Endothelial cell of umbilical vein (primary cell): ENCODE measurements at regions of chr17 and their contacts with region 1.

Region 1: GRCh38 chr17:64129764-64130558 is at the start of gene ERN1:
- DNase-seq: peak; percentile 92
- H3K4me3 ChIP-seq: peak within 1 kb of the TSS; percentile 68 to 92 (median 73)
- H3K27ac ChIP-seq: peak within 1 kb of the TSS; percentile 91
- H3K4me1 ChIP-seq: peaks cover 23% of the 10 kb centered on the region
- H3K27me3 ChIP-seq: no peaks in the 10 kb centered on the region
- CTCF ChIP-seq: no peak
- POLR2A ChIP-seq: peak; percentile 97
- total RNA-seq, gene ERN1: 14.7 and 21.5 TPM in 2 replicates

Region 2: DNA sequence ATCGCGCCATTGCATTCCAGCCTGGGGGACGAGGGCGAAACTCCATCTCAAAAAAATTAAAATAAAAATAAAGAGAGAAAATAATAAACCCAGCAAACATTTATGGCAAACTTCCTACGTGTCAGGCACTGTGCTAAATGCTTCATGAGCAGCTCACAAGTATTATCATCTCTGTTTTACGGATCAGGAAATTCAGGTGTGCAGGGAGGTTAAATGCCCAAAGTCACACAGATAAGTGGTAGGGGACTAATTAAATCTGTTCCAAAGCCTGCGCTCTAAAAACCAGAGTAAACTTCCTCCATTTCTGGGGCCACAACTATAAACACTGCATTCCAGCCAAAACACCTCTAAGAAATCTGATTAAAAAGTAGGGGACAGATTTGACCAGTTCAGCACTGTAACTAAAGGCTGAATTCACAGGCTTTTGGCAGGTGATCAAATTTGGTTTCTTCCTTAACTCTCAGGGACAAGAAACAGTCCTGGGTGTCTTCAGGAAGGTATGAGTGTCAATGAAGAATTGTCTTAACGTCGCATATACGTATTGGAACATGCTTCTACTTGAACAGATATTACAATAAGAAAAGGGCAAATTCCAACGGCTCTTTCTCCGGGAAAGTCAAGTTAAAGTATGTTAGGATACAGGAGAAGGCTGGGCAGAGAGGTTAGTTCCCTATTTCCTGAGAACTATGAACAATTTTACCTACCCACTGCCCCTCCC is 389.3 kb before region 1 on chr17:
- CTCF ChIA-PET with region 1: no interaction called
- POLR2A ChIA-PET with region 1: no interaction called
- dilution Hi-C with region 1: no loop called
- intact Hi-C with region 1: no loop called
- DNase-seq: peak; percentile 40
- H3K4me3 ChIP-seq: peak overlapping the region; percentile 72 to 98 (median 89)
- H3K27ac ChIP-seq: peak overlapping the region; percentile 77
- H3K4me1 ChIP-seq: peaks cover 12% of the 10 kb centered on the region
- H3K27me3 ChIP-seq: no peaks in the 10 kb centered on the region
- CTCF ChIP-seq: no peak
- POLR2A ChIP-seq: no peak

Region 3: GRCh38 chr17:63911657-63912426 is 218.1 kb before region 1 on chr17:
- CTCF ChIA-PET with region 1: interaction called, 33 read pairs
- POLR2A ChIA-PET with region 1: no interaction called
- dilution Hi-C with region 1: no loop called
- intact Hi-C with region 1: loop called (anchors 2 kb)
- DNase-seq: peak; percentile 26
- H3K4me3 ChIP-seq: no peak overlapping the region
- H3K27ac ChIP-seq: no peak overlapping the region
- H3K4me1 ChIP-seq: no peaks in the 10 kb centered on the region
- H3K27me3 ChIP-seq: peaks cover 6 to 8% of the 10 kb centered on the region in 2 experiments
- CTCF ChIP-seq: peak; percentile 34 to 70
- POLR2A ChIP-seq: no peak

Region 4: GRCh38 chr17:64005734-64006167 is 124.2 kb before region 1 on chr17:
- CTCF ChIA-PET with region 1: interaction called, 39 read pairs
- POLR2A ChIA-PET with region 1: interaction called, 12 read pairs
- dilution Hi-C with region 1: no loop called
- intact Hi-C with region 1: no loop called
- DNase-seq: peak; percentile 64
- H3K4me3 ChIP-seq: peak overlapping the region; percentile 66 to 87 (median 73)
- H3K27ac ChIP-seq: peak overlapping the region; percentile 91
- H3K4me1 ChIP-seq: peaks cover 85% of the 10 kb centered on the region
- H3K27me3 ChIP-seq: no peaks in the 10 kb centered on the region
- CTCF ChIP-seq: no peak
- POLR2A ChIP-seq: no peak

Region 5: GRCh38 chr17:64051153-64051552 is 78.8 kb before region 1 on chr17:
- CTCF ChIA-PET with region 1: interaction called, 21 read pairs
- POLR2A ChIA-PET with region 1: no interaction called
- dilution Hi-C with region 1: loop called (anchors 25 kb)
- intact Hi-C with region 1: no loop called
- DNase-seq: no peak
- H3K4me3 ChIP-seq: no peak overlapping the region
- H3K27ac ChIP-seq: no peak overlapping the region
- H3K4me1 ChIP-seq: no peaks in the 10 kb centered on the region
- H3K27me3 ChIP-seq: no peaks in the 10 kb centered on the region
- CTCF ChIP-seq: no peak
- POLR2A ChIP-seq: no peak

Region 6: GRCh38 chr17:64097196-64097936 is 32.6 kb before region 1 on chr17:
- CTCF ChIA-PET with region 1: interaction called, 10 read pairs
- POLR2A ChIA-PET with region 1: no interaction called
- dilution Hi-C with region 1: no loop called
- intact Hi-C with region 1: loop called (anchors 1 kb)
- DNase-seq: peak; percentile 97
- H3K4me3 ChIP-seq: no peak overlapping the region
- H3K27ac ChIP-seq: peak overlapping the region; percentile 83
- H3K4me1 ChIP-seq: peaks cover 26% of the 10 kb centered on the region
- H3K27me3 ChIP-seq: no peaks in the 10 kb centered on the region
- CTCF ChIP-seq: no peak
- POLR2A ChIP-seq: no peak

Region 7: DNA sequence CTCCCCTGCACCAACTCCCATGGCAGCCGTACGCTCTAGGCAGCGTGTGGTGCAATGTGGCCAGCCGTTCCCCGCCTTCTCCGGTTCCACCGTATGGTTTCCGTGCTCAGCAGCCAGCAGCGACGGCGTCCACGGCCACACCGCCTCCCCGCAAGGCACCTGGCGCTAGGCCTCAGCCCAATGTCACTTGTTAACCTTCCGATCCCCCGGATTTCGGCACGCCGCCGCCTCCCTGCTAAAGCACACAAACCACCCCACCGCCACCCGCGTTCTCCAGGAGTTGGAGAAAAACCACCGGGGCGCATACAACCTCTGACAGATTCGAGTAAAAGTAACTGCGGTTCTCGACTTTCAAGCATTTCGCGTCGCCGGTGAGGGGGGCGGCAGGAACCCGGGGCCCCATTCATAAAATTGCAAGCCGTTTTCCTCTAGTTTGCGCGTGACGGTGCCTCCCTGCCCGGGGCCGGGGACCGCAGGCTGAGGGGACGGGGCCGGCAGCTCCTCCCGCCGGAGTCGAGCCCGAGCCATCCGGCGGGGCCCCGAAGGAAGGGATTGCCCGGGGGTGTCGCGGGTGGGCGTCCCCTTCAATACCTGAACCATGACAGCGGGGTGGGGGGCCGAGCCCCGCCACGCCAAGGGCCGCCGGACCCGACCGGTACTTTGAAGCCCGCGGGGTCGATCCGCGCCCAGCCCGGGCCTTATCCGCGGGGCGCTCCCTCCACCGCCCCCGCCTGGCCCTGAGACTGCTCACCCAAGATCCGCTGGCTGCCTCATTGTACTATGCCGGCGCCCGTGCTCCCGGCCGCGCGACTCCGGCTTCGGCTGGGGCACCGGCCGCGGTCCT is 132.7 kb after region 1 on chr17 and contains the start of gene TEX2:
- CTCF ChIA-PET with region 1: interaction called, 11 read pairs
- POLR2A ChIA-PET with region 1: no interaction called
- dilution Hi-C with region 1: no loop called
- intact Hi-C with region 1: no loop called
- DNase-seq: peak; percentile 42
- H3K4me3 ChIP-seq: peak within 1 kb of the TSS; percentile 52 to 68 (median 59)
- H3K27ac ChIP-seq: peak within 1 kb of the TSS; percentile 40
- H3K4me1 ChIP-seq: peaks cover 14% of the 10 kb centered on the region
- H3K27me3 ChIP-seq: peaks cover 5 to 7% of the 10 kb centered on the region in 2 experiments
- CTCF ChIP-seq: no peak
- POLR2A ChIP-seq: peak; percentile 54
- total RNA-seq, gene TEX2: 21.7 and 25.8 TPM in 2 replicates